ENCODE measurements at regions of chr18 and their contacts with region 1.

Region 1: DNA sequence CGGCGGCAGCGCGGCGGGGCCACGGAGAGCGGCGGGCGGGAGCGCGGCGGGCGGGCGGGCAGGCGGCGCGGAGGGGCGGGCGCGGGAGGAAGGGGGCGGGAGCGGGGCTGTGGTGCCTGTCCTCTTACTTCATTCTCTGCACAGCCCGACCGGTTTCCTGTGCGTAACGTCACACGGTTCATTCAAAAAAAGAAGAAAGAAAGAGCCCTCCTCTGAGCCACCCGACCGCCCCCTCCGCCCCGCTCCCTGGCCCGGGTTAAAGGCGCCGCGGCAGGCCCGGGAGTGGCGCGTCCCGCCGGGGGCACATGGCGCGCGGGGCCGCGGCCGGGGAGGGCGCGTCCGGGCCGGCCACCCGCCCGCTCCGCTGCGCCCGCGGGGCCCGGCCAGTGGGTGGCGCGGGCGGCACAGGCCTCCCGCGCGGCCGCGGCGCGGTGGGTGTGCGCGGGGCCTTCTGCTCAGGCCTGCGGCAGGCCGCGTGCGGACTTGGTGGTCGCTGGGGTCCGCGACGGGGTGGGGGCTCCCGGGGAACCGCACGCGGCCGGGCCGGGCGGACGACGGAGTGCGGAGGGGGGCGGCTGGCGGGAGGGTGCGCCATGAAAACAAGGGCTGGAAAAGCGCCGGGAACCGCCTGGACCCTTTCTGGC is 599 bp upstream of the BCL2 start:
- DNase-seq: peak; percentile 93
- ATAC-seq: peak; percentile 81
- H3K4me3 Mint-ChIP-seq: peak overlapping the region; percentile 94
- H3K27ac Mint-ChIP-seq: peak overlapping the region; percentile 91
- H3K4me1 Mint-ChIP-seq: peaks cover 27% of the 10 kb centered on the region
- H3K27me3 Mint-ChIP-seq: no peaks in the 10 kb centered on the region

Region 2: GRCh38 chr18:63016270-63016669 is 303.9 kb before region 1 on chr18:
- CTCF ChIA-PET with region 1: interaction called, 144 read pairs
- POLR2A ChIA-PET with region 1: interaction called, 4 read pairs
- DNase-seq: peak; percentile 66
- ATAC-seq: peak; percentile 57
- H3K4me3 Mint-ChIP-seq: no peak overlapping the region
- H3K27ac Mint-ChIP-seq: no peak overlapping the region
- H3K4me1 Mint-ChIP-seq: no peaks in the 10 kb centered on the region
- H3K27me3 Mint-ChIP-seq: peaks cover 38% of the 10 kb centered on the region

Region 3: DNA sequence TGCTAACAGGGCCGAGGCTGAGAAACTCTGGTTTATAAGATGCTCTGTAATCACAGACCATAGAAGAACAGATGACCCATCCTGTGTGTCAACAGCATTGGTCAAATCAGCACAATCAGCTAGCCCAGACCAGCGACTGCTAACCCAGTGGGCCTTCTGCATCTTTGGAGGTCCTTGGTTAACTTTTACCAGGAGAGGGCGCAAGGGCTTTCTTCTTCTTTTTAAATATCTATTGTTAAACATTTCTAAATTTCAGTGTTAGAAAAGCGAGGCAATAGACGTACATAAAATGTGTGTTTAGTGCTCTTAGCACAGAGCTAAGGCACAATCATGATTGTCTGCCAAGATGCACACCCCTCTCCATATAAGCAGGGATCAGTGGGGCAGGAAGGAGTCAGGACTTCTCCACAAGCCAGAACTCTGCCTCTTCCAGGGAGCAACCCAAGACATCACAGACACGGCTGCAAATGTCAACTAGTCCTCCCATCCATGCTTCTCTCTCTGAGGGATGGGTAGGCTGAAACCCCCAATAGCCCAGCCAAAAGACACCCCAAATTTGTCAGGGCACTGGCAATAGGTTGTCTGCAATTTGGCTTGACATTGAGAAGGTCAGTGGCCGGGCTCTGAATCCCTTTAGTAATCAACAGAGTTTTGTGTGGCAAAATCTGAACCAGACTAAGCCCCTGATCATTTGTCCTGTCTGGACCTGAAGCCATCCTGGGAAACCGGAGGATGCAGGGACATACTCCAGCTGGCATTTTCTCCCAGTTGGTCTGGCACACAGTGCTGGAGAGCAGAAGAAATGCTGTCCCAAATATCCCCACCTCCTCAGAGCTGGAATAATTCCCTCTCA is 188.8 kb before region 1 on chr18:
- CTCF ChIA-PET with region 1: interaction called, 74 read pairs
- POLR2A ChIA-PET with region 1: interaction called, 28 read pairs
- DNase-seq: peak; percentile 73
- ATAC-seq: peak; percentile 56
- H3K4me3 Mint-ChIP-seq: no peak overlapping the region
- H3K27ac Mint-ChIP-seq: peak overlapping the region; percentile 70
- H3K4me1 Mint-ChIP-seq: peaks cover 52% of the 10 kb centered on the region
- H3K27me3 Mint-ChIP-seq: no peaks in the 10 kb centered on the region

Region 4: DNA sequence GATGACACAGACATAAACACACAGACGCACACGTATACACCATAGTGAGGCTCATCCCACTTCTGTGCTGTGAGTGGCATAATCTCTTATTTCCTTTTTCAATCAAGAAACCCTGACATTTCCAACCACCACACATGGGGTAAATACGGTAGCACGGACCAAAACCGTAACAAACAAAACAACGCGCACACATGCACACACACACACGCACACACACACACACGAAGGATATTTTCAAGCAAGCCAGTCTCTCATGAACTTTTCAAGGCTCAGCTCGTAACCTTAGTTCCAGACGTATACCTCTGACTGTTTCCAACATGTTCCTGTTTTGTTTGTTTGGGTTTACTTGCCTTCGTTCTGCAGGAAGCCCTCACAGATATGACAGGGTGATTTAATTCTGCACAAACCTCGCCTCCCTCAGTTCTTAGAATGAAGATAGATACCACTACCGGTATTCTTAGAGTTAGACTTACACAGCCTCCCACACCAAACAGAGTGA is 120.4 kb before region 1 on chr18:
- CTCF ChIA-PET with region 1: interaction called, 47 read pairs
- POLR2A ChIA-PET with region 1: interaction called, 205 read pairs
- DNase-seq: peak; percentile 78
- ATAC-seq: peak; percentile 80
- H3K4me3 Mint-ChIP-seq: no peak overlapping the region
- H3K27ac Mint-ChIP-seq: no peak overlapping the region
- H3K4me1 Mint-ChIP-seq: peaks cover 49% of the 10 kb centered on the region
- H3K27me3 Mint-ChIP-seq: no peaks in the 10 kb centered on the region

Region 5: DNA sequence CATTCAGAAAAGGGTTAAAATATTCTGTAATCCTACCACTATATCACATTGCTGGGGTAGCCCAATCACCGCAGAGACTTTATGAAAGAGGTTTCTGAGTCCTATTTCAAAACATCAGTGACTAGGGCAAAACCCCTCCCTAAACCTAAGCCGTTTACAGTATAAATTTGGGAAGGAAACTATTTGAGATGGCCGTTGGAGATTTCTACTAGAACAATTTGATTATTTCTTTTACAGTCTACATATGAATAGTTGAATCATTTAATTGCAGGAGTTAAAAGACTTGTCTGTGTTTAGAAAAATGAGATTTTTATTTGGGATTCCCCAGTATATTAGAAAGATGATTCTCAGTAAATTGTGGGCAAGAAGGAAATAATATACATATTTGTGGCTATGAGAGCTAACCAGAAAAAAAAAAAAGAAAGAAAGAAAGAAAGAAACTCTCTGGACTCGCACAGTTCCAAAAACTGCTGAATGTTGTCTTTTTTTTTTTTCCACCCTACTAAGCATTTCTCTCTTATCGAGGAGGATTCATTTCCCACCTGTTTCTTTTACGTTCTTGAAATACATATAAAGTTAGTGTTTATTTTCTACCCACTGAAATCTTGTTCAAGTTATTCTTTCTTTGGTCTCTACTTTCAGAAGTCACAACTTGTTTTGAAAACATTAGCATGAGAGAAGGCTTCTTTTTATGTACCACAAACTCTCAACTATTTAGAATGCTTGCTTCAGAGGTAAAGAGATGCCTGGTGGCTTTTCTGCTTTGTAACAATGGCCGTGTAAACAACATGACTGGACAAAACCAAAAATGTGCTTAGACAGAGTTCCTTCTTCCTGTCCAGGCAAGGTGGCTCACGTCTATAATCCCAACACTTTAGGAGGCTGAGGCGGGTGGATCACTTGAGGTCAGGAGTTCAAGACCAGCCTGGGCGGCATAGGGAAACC is 66.5 kb before region 1 on chr18:
- CTCF ChIA-PET with region 1: interaction called, 10 read pairs
- POLR2A ChIA-PET with region 1: interaction called, 3 read pairs
- DNase-seq: no peak
- ATAC-seq: peak; percentile 5
- H3K4me3 Mint-ChIP-seq: peak overlapping the region; percentile 10
- H3K27ac Mint-ChIP-seq: peak overlapping the region; percentile 58
- H3K4me1 Mint-ChIP-seq: peaks cover 90% of the 10 kb centered on the region
- H3K27me3 Mint-ChIP-seq: no peaks in the 10 kb centered on the region

Region 6: GRCh38 chr18:63299837-63300745 is 20.1 kb before region 1 on chr18:
- CTCF ChIA-PET with region 1: interaction called, 84 read pairs
- POLR2A ChIA-PET with region 1: interaction called, 24 read pairs
- DNase-seq: peak; percentile 70
- ATAC-seq: peak; percentile 67
- H3K4me3 Mint-ChIP-seq: peak overlapping the region; percentile 62
- H3K27ac Mint-ChIP-seq: peak overlapping the region; percentile 86
- H3K4me1 Mint-ChIP-seq: peaks cover 89% of the 10 kb centered on the region
- H3K27me3 Mint-ChIP-seq: no peaks in the 10 kb centered on the region

Region 7: DNA sequence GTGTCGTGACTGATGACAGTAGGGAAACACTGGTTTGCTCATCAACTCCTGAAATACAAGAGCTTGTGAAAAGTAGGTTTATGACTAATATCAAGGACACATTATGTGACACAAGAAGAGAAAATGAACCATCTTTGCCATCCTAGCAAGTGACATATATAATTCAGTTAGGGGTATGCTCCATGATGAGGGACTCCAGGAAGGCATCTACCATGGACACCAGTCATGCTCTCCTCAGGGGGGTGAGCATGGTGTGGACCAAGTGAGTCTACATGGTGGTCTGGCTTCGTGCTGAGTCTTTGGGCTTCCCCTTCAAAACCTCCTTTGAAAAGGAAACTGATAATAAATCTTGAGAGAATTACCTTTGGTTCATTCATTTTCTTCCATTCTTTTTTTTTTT is 144.9 kb after region 1 on chr18:
- CTCF ChIA-PET with region 1: no interaction called
- POLR2A ChIA-PET with region 1: no interaction called
- DNase-seq: no peak
- ATAC-seq: no peak
- H3K4me3 Mint-ChIP-seq: no peak overlapping the region
- H3K27ac Mint-ChIP-seq: no peak overlapping the region
- H3K4me1 Mint-ChIP-seq: no peaks in the 10 kb centered on the region
- H3K27me3 Mint-ChIP-seq: peaks cover 39% of the 10 kb centered on the region

Region 8: DNA sequence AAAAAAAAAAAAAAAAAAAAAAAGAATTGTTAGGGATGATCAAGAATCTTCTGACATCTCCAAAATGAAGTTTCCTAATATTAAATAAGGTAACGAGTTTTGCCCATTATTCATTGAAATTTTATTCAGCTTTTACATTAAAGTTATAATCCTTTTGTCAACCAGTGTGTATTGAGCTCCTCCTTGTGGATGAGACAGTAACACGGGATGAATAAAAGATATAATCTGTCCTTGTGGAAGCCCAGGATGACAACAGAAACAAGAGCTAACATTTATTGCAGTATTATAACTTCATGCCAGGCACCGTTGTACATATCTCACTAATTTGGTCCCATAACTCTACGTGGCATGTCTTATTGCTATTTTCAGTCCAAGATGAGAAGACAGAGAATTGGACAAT is 421.6 kb after region 1 on chr18:
- CTCF ChIA-PET with region 1: no interaction called
- POLR2A ChIA-PET with region 1: no interaction called
- DNase-seq: no peak
- ATAC-seq: no peak
- H3K4me3 Mint-ChIP-seq: no peak overlapping the region
- H3K27ac Mint-ChIP-seq: no peak overlapping the region
- H3K4me1 Mint-ChIP-seq: no peaks in the 10 kb centered on the region
- H3K27me3 Mint-ChIP-seq: no peaks in the 10 kb centered on the region

Region 9: GRCh38 chr18:64659196-64659595 is 1339.0 kb after region 1 on chr18:
- CTCF ChIA-PET with region 1: no interaction called
- POLR2A ChIA-PET with region 1: no interaction called
- DNase-seq: no peak
- ATAC-seq: no peak
- H3K4me3 Mint-ChIP-seq: no peak overlapping the region
- H3K27ac Mint-ChIP-seq: no peak overlapping the region
- H3K4me1 Mint-ChIP-seq: no peaks in the 10 kb centered on the region
- H3K27me3 Mint-ChIP-seq: no peaks in the 10 kb centered on the region

Measured in activated CD8-positive, alpha-beta T cell treated with anti-CD3 and anti-CD28 coated beads, Interleukin-2, amount 10 ng/mL, durations not matched to agents 7 days and 5 days (primary cell).